AG04449 (cell line): ENCODE measurements at regions of chr11 and their contacts with region 1.

Region 1: DNA sequence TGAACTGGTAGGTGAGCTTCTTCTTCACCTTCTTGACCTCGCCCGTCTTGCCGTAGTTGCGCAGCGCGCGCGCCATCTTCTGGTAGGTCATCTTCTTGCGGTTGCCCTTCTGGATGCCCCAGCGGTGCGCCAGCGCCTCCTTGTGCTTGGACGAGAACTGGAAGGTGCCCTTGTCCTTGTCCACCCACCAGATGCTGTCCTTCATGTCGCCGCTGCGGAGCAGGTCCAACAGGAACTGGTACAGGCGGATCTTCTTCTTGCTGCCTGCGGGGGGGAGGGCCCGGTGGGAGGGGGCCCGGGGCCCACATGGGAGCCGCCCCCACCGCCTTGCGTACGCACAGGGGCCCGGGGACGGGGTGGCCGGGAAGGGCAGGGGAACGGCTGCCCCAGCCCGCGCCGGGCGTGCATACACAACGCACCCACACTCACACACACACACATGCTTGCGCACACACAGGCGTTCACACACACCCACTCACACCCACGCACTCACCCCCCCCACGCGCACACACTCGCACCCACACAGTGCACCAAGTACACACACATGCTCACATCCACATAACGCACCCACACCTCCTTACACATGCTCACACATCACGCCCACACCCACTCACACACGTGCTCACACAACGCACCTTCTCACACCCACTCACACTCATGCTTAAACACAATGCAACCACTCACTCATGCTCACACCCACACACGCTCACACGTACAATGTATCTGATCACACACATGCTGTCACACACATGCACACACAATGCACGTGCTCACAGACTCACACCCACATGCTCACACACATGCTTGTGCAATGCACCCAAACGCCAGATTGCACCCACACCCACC is 3.0 kb upstream of the MYBPC3 start:
- DNase-seq: peak; percentile 59
- H3K4me3 ChIP-seq: peak overlapping the region; percentile 36
- CTCF ChIP-seq: peak; percentile 100

Region 2: DNA sequence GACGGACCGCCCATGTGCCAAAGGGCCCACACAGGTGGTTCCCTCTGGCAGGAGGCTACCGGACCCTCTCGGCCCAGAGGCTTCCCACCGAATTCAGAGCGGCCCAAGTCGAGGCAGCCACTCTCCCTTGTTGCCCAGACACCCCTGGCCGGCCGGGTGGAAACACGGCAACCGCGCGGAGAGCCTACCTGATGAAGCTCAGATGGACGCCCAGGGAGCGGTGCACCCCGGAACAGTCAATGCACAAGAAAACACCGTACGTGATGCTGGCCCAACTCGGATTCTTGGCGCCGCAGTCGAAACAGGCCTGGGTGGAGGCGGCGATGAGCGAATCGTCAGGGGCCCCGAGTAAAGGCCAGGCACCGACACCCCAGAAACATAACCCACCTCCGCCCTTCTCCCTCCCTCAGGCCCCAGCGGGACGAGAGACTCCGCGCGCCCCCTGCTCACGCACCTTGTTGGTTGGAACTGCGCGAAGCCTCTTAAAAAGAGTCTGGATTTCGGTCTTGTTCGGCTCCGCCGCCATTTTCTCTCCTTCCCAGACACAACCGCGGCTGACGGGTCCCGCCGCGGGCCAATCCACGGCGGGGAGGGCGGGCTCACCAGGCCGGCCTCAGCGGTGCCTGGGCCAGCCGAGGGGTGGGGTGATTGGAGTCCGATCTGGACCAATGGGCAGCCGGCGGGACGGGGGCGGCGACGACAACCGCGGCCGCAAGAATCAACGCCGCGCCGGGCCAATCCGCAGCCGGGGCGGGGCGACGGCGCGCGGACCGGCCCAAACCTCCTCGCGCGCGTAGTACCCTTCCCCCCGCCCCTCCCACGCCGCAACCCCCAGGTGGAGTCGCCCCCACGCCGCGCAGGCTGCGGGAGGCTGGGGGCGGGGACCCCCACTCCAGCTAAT is 178.9 kb before region 1 on chr11 and contains the start of gene ARFGAP2:
- CTCF ChIA-PET with region 1: interaction called, 99 read pairs
- POLR2A ChIA-PET with region 1: no interaction called
- DNase-seq: peak; percentile 62
- H3K4me3 ChIP-seq: peak within 1 kb of the TSS; percentile 98
- CTCF ChIP-seq: no peak

Region 3: DNA sequence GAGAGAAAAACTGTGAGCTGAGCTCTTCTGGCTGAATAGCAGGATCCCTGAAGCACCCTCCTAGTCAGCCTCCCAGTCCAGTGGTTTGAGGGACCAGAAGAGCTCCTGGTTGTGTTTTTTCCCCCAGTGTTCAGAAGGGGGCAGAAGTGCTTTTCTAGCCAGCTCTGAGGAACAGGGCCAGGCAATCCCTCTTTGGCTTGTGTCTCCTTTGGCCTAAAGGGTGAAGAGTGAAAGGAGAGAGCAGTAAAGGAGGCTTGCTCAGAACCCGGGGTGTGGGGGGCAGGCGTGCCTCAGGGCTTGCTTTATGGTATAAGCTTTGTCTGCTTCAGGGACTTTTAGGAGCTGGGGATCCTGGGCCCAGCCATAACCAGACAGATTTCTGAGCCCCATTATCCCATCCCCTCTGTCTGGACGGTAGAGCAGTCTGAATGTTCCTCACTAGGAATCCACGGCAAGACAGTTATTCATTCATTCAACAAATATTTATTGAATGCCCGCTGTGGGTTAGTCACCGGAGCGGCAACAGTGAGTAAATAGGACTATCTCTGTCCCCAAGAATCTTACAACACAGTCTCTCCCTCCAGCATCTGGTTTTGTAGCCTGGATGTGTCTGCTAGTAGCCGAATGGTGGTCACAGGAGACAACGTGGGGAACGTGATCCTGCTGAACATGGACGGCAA is 121.4 kb before region 1 on chr11:
- CTCF ChIA-PET with region 1: interaction called, 18 read pairs
- POLR2A ChIA-PET with region 1: no interaction called
- DNase-seq: no peak
- H3K4me3 ChIP-seq: no peak overlapping the region
- CTCF ChIP-seq: peak; percentile 47

Region 4: DNA sequence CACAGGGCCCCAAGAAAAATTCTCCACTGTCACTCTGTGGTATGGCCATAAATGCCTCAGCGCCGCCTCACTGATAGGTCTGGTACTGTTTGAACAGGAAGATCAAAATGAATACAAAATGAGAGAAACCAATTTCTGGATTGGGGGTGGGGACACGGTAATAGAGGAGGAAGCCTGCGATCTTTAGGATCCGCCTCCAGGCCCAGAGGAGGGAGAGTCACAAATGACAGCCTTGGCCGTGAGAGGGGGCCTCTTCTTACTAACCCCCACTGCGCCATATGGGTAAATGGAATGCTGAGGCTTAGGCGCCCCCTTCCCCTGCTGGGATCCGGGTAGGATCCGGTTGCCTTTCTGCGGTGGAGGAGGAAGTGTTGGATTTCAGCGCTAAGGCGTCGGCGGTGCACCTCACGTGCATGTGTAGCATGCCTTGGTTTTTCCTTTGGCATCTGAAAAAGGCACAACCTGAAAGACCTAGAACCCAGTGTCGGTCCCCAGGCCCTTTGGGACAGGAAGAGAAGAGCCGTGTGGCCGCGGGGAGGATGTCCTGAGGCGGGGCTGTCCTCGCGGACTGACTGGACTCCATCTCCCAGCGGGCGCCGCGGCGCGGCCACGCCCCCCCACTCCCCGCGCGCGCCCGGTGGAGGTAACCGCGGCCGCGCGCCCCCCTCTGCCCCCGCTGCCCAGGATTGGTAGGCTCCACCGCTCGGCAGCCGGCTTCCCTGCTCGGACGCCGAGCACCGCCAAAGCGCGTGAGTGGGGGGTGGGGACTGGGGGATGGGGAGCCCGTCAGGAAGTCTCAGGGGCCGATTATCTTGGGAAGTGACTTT is 86.3 kb before region 1 on chr11:
- CTCF ChIA-PET with region 1: interaction called, 11 read pairs
- POLR2A ChIA-PET with region 1: no interaction called
- DNase-seq: peak; percentile 44
- H3K4me3 ChIP-seq: peak overlapping the region; percentile 75
- CTCF ChIP-seq: peak; percentile 11

Region 5: DNA sequence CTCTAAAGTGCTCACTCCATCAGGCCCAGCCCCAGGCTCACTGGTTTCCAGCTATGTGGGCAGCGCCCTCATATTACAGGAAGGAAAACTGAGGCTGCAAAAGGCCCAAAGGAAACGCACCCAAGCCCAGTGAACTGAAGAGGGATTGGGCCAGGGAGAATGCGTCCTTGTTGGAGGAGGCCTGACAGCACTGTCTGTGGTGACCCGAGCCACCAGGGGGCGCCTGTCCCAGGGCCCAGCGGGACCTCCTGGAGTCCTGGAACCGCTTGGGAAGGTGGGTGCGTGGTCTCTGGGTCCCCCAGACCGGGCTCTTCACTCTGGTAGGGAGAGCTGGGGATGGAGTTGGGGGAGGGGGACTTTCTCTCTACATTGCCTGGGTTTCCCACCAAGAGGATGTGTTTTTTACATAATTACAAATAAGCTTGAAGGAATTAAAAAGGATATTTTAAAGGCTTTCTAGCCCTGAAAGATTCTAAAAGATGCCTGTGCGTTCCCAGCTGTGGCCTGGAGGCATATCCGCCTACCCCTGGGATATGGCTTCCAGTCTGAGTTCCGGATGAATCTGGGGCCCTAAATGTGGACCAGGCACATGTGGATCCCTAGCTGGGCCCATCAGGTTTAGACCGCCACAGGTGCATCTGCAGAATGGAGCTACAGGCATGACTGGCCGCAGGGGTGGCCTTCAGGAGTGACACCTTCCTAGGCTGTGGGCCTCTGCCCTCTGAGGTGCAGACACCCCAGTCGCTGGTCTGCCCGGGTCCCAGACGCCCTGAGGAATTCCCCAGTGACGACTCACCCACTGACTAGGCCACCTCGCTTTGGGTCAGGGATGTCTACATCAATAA is 18.6 kb after region 1 on chr11:
- CTCF ChIA-PET with region 1: interaction called, 30 read pairs
- POLR2A ChIA-PET with region 1: no interaction called
- DNase-seq: no peak
- H3K4me3 ChIP-seq: no peak overlapping the region
- CTCF ChIP-seq: peak; percentile 98